ENCODE measurements at regions of chr18 and their contacts with region 1.

Region 1: GRCh38 chr18:60413944-60414547 is 41.5 kb upstream of the MC4R start:
- DNase-seq: peak; percentile 52
- H3K4me3 Mint-ChIP-seq: no peak overlapping the region
- H3K27ac Mint-ChIP-seq: no peak overlapping the region
- H3K4me1 Mint-ChIP-seq: no peaks in the 10 kb centered on the region
- H3K27me3 Mint-ChIP-seq: no peaks in the 10 kb centered on the region
- CTCF ChIP-seq: peak; percentile 54

Region 2: GRCh38 chr18:59837586-59837985 is 576.5 kb before region 1 on chr18:
- CTCF ChIA-PET with region 1: no interaction called
- intact Hi-C with region 1: loop called (anchors 5 kb)
- DNase-seq: peak; percentile 67
- H3K4me3 Mint-ChIP-seq: no peak overlapping the region
- H3K27ac Mint-ChIP-seq: no peak overlapping the region
- H3K4me1 Mint-ChIP-seq: peaks cover 26% of the 10 kb centered on the region
- H3K27me3 Mint-ChIP-seq: no peaks in the 10 kb centered on the region
- CTCF ChIP-seq: peak; percentile 86

Region 3: DNA sequence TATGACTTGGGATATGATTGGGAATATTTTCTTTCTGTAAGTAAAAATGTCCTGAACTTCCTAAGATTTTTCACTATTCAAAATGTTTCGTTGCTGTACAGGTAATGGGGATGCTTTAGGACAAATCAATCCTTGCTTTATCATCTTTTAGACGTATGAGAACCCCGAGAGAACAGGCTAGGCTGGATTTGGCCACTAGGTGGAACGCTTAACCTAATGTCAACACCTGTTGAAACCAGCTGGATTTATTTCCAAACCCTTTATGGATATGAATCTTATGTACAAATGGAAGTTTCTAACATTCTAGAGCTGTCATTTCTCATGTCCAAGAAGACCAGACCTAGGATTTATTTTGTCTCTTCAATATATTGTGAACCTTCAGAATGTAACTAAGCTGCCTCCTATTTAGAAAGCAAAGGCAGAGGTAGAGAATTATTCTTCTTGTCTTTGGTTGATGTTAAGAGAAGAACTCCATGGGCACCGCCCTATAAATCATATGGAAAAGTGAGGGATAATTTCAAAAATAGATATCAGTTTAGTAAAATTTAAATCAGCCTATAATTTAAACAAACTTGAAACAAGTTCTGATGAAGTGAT is 417.6 kb before region 1 on chr18:
- CTCF ChIA-PET with region 1: interaction called, 34 read pairs
- intact Hi-C with region 1: loop called (anchors 1 kb)
- DNase-seq: peak; percentile 67
- H3K4me3 Mint-ChIP-seq: no peak overlapping the region
- H3K27ac Mint-ChIP-seq: no peak overlapping the region
- H3K4me1 Mint-ChIP-seq: no peaks in the 10 kb centered on the region
- H3K27me3 Mint-ChIP-seq: no peaks in the 10 kb centered on the region
- CTCF ChIP-seq: peak; percentile 73

Region 4: GRCh38 chr18:60090170-60090569 is 323.9 kb before region 1 on chr18:
- CTCF ChIA-PET with region 1: interaction called, 3 read pairs
- intact Hi-C with region 1: loop called (anchors 1 kb)
- DNase-seq: no peak
- H3K4me3 Mint-ChIP-seq: no peak overlapping the region
- H3K27ac Mint-ChIP-seq: no peak overlapping the region
- H3K4me1 Mint-ChIP-seq: no peaks in the 10 kb centered on the region
- H3K27me3 Mint-ChIP-seq: no peaks in the 10 kb centered on the region
- CTCF ChIP-seq: no peak

Region 5: GRCh38 chr18:60549338-60549960 is 135.4 kb after region 1 on chr18:
- CTCF ChIA-PET with region 1: no interaction called
- intact Hi-C with region 1: loop called (anchors 5 kb)
- DNase-seq: peak; percentile 30
- H3K4me3 Mint-ChIP-seq: no peak overlapping the region
- H3K27ac Mint-ChIP-seq: peak overlapping the region; percentile 28
- H3K4me1 Mint-ChIP-seq: no peaks in the 10 kb centered on the region
- H3K27me3 Mint-ChIP-seq: no peaks in the 10 kb centered on the region
- CTCF ChIP-seq: peak; percentile 68

Region 6: GRCh38 chr18:60577457-60577856 is 163.4 kb after region 1 on chr18:
- CTCF ChIA-PET with region 1: no interaction called
- intact Hi-C with region 1: no loop called
- DNase-seq: no peak
- H3K4me3 Mint-ChIP-seq: no peak overlapping the region
- H3K27ac Mint-ChIP-seq: no peak overlapping the region
- H3K4me1 Mint-ChIP-seq: no peaks in the 10 kb centered on the region
- H3K27me3 Mint-ChIP-seq: no peaks in the 10 kb centered on the region
- CTCF ChIP-seq: no peak